Activated CD8-positive, alpha-beta T cell treated with anti-CD3 and anti-CD28 coated beads, Interleukin-2, amount 10 ng/mL, durations not matched to agents 7 days and 5 days (primary cell): ENCODE measurements at regions of chr10 and their contacts with region 1.

Region 1: GRCh38 chr10:30529373-30529998 is 95.5 kb downstream of the MAP3K8 start:
- DNase-seq: peak; percentile 93
- ATAC-seq: peak; percentile 90
- H3K4me3 Mint-ChIP-seq: peak overlapping the region; percentile 84
- H3K27ac Mint-ChIP-seq: peak overlapping the region; percentile 97
- H3K4me1 Mint-ChIP-seq: peaks cover 88% of the 10 kb centered on the region
- H3K27me3 Mint-ChIP-seq: no peaks in the 10 kb centered on the region

Region 2: GRCh38 chr10:30186371-30186875 is 343.1 kb before region 1 on chr10:
- CTCF ChIA-PET with region 1: no interaction called
- POLR2A ChIA-PET with region 1: no interaction called
- DNase-seq: no peak
- ATAC-seq: no peak
- H3K4me3 Mint-ChIP-seq: no peak overlapping the region
- H3K27ac Mint-ChIP-seq: no peak overlapping the region
- H3K4me1 Mint-ChIP-seq: no peaks in the 10 kb centered on the region
- H3K27me3 Mint-ChIP-seq: peaks cover 2% of the 10 kb centered on the region

Region 3: DNA sequence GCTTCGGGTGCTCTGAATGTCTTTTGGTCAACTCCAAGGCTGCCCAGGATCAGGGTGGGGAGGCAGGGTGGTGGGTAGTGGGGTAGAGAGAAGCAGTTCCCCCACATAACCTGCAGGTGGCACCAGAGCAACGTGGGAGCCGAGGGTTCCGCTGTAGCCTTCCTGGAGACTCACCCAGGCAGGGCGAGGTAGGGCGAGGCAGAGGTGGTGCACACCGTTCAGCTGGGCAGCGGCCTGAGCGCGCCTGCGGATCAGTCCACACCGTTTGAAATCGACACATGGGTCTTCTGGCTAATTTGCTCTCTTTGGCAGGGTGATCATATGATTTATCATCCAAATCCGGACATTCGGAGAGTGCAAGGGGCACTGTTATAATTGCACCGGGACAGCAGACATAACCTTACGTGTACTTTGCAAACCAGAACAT is 136.9 kb before region 1 on chr10:
- CTCF ChIA-PET with region 1: interaction called, 87 read pairs
- POLR2A ChIA-PET with region 1: no interaction called
- DNase-seq: peak; percentile 84
- ATAC-seq: peak; percentile 100
- H3K4me3 Mint-ChIP-seq: peak overlapping the region; percentile 35
- H3K27ac Mint-ChIP-seq: peak overlapping the region; percentile 54
- H3K4me1 Mint-ChIP-seq: peaks cover 16% of the 10 kb centered on the region
- H3K27me3 Mint-ChIP-seq: peaks cover 29% of the 10 kb centered on the region

Region 4: DNA sequence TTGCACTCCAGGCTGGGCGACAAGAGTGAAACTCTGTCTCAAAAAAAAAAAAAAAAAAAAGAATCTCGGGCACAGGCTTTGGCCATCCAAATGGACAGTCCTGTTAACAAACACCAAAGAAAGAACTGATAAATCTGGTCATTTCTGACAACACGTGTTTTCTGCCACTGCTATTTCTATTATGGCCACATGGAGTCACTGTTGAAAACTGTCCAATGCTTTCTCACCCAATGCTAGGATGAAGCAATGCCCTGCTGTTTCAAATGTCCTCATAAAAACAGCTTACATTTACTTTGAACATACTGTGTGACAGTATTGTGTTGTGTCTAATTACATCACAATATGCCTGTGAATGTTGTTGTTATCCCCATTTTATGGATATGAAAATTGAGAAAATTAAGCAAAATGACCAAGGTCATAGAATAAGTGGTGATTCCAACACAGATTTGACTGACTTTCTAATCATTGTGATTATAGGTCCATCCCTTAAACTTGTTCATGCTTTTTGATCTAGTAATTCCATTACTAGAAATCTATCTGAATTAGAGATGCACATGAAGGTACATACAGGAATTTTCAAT is 115.4 kb before region 1 on chr10:
- CTCF ChIA-PET with region 1: interaction called, 106 read pairs
- POLR2A ChIA-PET with region 1: interaction called, 10 read pairs
- DNase-seq: peak; percentile 63
- ATAC-seq: peak; percentile 49
- H3K4me3 Mint-ChIP-seq: no peak overlapping the region
- H3K27ac Mint-ChIP-seq: no peak overlapping the region
- H3K4me1 Mint-ChIP-seq: peaks cover 35% of the 10 kb centered on the region
- H3K27me3 Mint-ChIP-seq: no peaks in the 10 kb centered on the region

Region 5: DNA sequence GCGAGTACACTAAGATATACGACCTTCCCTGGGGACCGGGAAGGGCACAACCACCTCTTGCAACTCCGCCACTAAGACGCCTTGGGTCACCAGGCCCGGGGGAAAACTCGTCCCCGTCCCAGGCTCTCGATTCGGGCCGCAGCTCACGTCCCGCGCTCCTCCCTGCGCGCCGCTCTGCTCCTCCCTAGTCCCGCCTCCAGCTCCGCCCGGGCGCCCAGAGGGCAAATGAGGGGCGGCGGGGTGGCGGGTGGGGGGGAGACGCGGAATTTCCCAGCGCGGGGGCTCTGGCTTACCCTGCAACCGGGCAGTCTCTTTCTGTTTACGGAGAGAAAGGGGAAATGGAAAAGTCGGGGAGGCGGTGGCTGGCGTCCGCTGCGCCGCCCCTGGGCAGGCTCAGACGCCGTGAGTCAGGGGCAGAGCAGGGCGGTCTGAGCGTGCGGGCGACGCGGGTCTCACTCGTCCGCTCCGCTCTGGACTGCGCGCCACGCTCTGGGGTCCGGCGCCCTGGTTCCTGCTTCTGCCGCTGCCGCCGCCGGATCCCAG is 95.7 kb before region 1 on chr10 and contains the start of gene MAP3K8:
- CTCF ChIA-PET with region 1: interaction called, 14 read pairs
- POLR2A ChIA-PET with region 1: interaction called, 30 read pairs
- DNase-seq: peak; percentile 85
- ATAC-seq: peak; percentile 80
- H3K4me3 Mint-ChIP-seq: peak within 1 kb of the TSS; percentile 92
- H3K27ac Mint-ChIP-seq: peak within 1 kb of the TSS; percentile 86
- H3K4me1 Mint-ChIP-seq: peaks cover 60% of the 10 kb centered on the region
- H3K27me3 Mint-ChIP-seq: no peaks in the 10 kb centered on the region
- total RNA-seq, gene MAP3K8: 26.0 to 27.7 TPM

Region 6: DNA sequence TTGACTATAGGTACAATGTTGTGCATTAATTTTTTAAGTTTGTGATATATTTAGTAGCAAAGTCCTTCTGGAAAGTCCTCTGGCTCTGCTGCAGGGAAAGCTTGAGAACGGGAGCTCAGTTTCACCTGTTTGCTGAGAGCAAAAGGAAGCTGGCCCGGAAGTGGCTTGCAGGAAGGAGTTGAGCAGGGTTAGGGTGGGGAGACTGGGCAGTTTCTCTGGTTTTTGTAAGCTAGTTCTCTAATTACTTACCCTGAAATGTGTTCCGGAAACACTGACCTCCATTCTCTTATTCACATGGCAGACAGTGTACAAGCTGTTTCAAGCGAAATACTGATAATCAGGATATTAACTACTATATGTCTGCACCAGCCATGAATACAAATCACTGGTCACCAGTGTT is 73.2 kb before region 1 on chr10:
- CTCF ChIA-PET with region 1: interaction called, 8 read pairs
- POLR2A ChIA-PET with region 1: interaction called, 15 read pairs
- DNase-seq: peak; percentile 73
- ATAC-seq: peak; percentile 82
- H3K4me3 Mint-ChIP-seq: peak overlapping the region; percentile 73
- H3K27ac Mint-ChIP-seq: peak overlapping the region; percentile 89
- H3K4me1 Mint-ChIP-seq: peaks cover 51% of the 10 kb centered on the region
- H3K27me3 Mint-ChIP-seq: no peaks in the 10 kb centered on the region

Region 7: DNA sequence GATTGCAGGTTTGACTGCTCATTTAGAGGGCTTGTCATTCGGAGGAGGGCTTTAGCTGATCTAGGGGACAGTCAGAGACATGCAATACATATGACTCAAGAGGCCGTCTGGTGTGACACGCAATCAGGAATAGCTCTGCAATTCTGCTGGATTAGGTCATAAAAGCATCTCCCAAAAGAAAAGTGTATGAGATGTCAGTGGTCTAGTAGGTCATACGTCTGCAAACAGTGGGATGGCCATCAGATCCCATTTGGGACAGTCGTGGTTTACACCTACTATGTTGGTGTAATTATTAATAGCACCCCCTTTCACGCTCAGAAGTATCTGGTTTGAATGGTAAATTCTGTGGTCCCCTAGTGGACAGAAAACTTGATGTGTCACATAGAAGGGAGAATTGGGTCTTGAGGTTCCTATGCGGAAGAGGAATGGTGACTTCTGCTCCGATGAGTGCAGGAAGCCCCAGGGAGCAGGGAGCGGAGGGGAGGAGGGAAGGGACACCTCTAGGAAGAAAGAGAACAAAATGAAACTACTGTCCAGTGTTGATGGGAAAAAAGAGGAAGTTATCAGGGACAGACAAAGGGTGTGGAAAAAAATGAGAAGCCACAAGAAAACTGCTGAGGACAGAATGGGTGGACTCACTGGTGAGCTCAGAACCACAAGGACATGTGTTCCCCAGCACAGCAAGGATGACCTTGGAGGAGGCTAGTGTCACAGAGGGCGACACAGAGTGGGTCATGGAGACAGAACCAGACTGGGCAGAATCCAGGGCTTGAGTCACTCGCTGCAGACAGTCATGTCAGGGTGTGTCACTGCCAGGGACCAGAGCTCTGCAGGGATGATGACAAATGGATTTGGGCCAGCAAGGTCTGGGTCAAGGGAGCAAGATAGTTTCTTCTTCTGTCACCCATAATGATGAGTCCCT is 35.6 kb before region 1 on chr10:
- CTCF ChIA-PET with region 1: interaction called, 35 read pairs
- POLR2A ChIA-PET with region 1: interaction called, 16 read pairs
- DNase-seq: peak; percentile 29
- ATAC-seq: no peak
- H3K4me3 Mint-ChIP-seq: no peak overlapping the region
- H3K27ac Mint-ChIP-seq: peak overlapping the region; percentile 73
- H3K4me1 Mint-ChIP-seq: peaks cover 86% of the 10 kb centered on the region
- H3K27me3 Mint-ChIP-seq: peaks cover 3% of the 10 kb centered on the region

Region 8: DNA sequence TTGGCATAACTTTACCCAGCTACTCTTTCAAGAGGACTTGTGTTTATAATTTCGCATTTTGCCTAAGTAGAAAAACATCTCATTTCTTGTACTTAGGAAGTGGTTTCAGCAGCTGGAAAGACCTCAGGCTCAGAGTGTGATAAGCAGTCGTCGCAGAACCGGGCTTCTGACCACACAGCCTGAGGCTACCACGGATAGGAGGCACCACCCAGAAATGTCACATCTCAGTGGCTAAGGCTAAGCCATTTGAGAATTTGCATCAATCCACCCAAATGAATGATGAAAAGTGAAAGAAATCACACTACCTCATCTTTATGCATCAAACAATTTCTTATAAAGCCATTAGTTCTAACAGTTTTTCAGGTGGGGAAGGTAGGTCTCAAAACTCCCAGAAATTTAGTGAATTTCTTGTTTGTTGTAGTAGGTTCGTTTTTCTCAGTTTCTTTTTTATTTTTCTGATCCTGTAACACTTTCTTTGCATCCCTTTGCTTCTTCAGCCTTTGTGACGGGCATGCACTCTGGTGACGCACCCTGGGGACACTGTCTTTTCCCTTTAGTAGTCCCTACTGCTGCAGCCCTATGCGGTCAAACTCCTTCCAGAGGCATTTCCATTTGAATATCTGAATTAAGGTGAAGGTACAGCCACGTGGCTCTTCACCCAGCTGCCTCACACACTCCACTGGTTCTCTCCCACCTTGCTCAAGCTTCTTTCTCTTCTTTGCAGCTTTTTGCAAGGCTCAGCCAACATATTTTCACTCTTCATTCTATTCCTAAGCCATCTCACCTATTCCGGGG is 27.0 kb before region 1 on chr10:
- CTCF ChIA-PET with region 1: interaction called, 35 read pairs
- POLR2A ChIA-PET with region 1: interaction called, 20 read pairs
- DNase-seq: peak; percentile 90
- ATAC-seq: peak; percentile 97
- H3K4me3 Mint-ChIP-seq: peak overlapping the region; percentile 68
- H3K27ac Mint-ChIP-seq: peak overlapping the region; percentile 94
- H3K4me1 Mint-ChIP-seq: peaks cover 93% of the 10 kb centered on the region
- H3K27me3 Mint-ChIP-seq: no peaks in the 10 kb centered on the region

Region 9: DNA sequence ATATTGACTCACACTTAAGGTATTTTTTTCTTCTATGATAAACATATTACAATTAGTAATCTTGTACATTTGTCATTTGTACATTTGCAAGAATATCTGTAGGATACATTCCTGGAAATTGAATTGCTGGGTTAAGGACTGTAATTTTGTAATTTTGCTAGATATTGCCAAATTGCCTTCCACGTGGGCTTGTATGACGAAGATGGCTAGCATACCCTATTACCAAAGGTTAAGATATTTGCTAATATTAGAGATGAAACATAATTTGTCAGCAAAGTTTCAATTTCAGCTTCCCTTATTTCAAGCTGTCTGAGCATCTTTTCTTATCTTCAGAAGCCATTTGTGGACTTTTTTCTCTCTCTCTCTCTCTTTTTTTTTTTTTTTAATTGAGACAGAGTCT is 101.1 kb after region 1 on chr10:
- CTCF ChIA-PET with region 1: no interaction called
- POLR2A ChIA-PET with region 1: no interaction called
- DNase-seq: no peak
- ATAC-seq: no peak
- H3K4me3 Mint-ChIP-seq: no peak overlapping the region
- H3K27ac Mint-ChIP-seq: no peak overlapping the region
- H3K4me1 Mint-ChIP-seq: no peaks in the 10 kb centered on the region
- H3K27me3 Mint-ChIP-seq: peaks cover 25% of the 10 kb centered on the region